Activated CD4-positive, alpha-beta memory T cell treated with anti-CD3 and anti-CD28 coated beads for 36 hours (primary cell): ENCODE measurements at regions of chr1 and their contacts with region 1.

Region 1: GRCh38 chr1:12434174-12434573 is 183.8 kb downstream of the DHRS3 start:
- DNase-seq: peak; percentile 85
- H3K4me3 Mint-ChIP-seq: peak overlapping the region; percentile 41
- H3K27ac Mint-ChIP-seq: peak overlapping the region; percentile 83
- H3K4me1 Mint-ChIP-seq: peaks cover 62% of the 10 kb centered on the region
- H3K27me3 Mint-ChIP-seq: no peaks in the 10 kb centered on the region

Region 2: GRCh38 chr1:12229835-12230548 is 204.2 kb before region 1 on chr1 and contains the start of gene VPS13D:
- CTCF ChIA-PET with region 1: no interaction called
- POLR2A ChIA-PET with region 1: no interaction called
- intact Hi-C with region 1: no loop called
- DNase-seq: peak; percentile 87
- H3K4me3 Mint-ChIP-seq: peak within 1 kb of the TSS; percentile 81
- H3K27ac Mint-ChIP-seq: peak within 1 kb of the TSS; percentile 45
- H3K4me1 Mint-ChIP-seq: peaks cover 23% of the 10 kb centered on the region
- H3K27me3 Mint-ChIP-seq: no peaks in the 10 kb centered on the region
- total RNA-seq, gene VPS13D: 25.0 to 25.4 TPM

Region 3: DNA sequence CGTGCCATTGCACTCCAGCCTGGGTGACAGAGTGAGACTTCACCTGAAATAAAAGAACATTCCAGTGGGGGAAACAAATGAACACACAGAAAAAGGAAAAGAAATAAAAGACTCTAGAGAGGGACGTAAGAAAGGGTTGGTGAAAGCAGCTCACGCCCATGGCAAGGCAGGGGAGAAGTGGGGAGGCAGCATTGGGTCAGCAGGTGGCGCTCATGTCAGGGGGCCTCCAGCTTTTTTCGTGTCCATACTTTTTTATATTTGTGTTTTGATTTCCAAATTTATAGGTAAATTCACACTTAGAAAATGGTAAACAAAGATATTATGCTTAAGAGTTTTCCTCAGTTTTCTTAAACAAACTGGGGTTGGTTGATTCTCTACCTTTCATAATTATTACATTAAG is 158.8 kb before region 1 on chr1:
- CTCF ChIA-PET with region 1: no interaction called
- POLR2A ChIA-PET with region 1: no interaction called
- intact Hi-C with region 1: no loop called
- DNase-seq: peak; percentile 63
- H3K4me3 Mint-ChIP-seq: no peak overlapping the region
- H3K27ac Mint-ChIP-seq: no peak overlapping the region
- H3K4me1 Mint-ChIP-seq: no peaks in the 10 kb centered on the region
- H3K27me3 Mint-ChIP-seq: no peaks in the 10 kb centered on the region

Region 4: GRCh38 chr1:12296623-12297022 is 137.6 kb before region 1 on chr1:
- CTCF ChIA-PET with region 1: no interaction called
- POLR2A ChIA-PET with region 1: interaction called, 4 read pairs
- intact Hi-C with region 1: loop called (anchors 1 kb)
- DNase-seq: no peak
- H3K4me3 Mint-ChIP-seq: no peak overlapping the region
- H3K27ac Mint-ChIP-seq: no peak overlapping the region
- H3K4me1 Mint-ChIP-seq: peaks cover 24% of the 10 kb centered on the region
- H3K27me3 Mint-ChIP-seq: no peaks in the 10 kb centered on the region

Region 5: GRCh38 chr1:12415038-12415466 is 19.1 kb before region 1 on chr1:
- CTCF ChIA-PET with region 1: interaction called, 4 read pairs
- POLR2A ChIA-PET with region 1: interaction called, 16 read pairs
- intact Hi-C with region 1: loop called (anchors 1 kb)
- DNase-seq: no peak
- H3K4me3 Mint-ChIP-seq: no peak overlapping the region
- H3K27ac Mint-ChIP-seq: peak overlapping the region; percentile 57
- H3K4me1 Mint-ChIP-seq: peaks cover 21% of the 10 kb centered on the region
- H3K27me3 Mint-ChIP-seq: no peaks in the 10 kb centered on the region

Region 6: DNA sequence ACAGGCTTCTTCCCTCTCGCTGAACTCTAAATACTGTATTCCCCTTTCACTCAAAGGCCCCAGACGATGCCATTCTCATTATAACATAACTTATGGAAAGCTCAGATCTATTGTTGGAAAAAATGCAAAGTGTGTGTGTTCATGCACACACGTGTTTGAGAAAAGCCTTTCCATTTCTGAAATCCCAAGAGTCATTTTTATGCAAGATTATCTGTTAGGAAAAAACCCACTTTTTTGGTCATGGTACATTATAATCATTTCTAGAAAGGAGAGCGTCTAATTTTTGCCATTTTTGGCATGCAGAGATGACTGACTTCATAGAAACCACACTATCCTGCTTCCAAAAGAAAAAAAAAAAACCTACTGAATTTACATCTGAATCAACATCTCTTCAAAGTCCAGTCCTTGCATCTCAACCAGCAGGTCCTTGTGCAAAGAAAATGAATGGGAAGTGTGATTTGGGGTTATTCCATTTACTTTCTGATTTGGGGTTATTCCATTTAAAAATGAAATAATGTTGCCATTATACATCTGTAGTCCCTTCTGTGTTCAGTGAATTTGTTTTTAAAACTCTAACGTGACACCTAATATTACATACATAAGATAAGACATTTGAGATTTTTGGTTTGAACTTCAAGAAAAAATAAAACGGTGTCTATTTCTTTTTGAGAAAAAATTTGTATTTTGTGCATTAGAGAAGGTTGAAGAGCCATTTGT is 33.6 kb after region 1 on chr1:
- CTCF ChIA-PET with region 1: interaction called, 5 read pairs
- POLR2A ChIA-PET with region 1: interaction called, 5 read pairs
- intact Hi-C with region 1: loop called (anchors 1 kb)
- DNase-seq: no peak
- H3K4me3 Mint-ChIP-seq: no peak overlapping the region
- H3K27ac Mint-ChIP-seq: peak overlapping the region; percentile 76
- H3K4me1 Mint-ChIP-seq: peaks cover 48% of the 10 kb centered on the region
- H3K27me3 Mint-ChIP-seq: no peaks in the 10 kb centered on the region

Region 7: GRCh38 chr1:12501661-12502060 is 67.5 kb after region 1 on chr1:
- CTCF ChIA-PET with region 1: no interaction called
- POLR2A ChIA-PET with region 1: interaction called, 13 read pairs
- intact Hi-C with region 1: no loop called
- DNase-seq: peak; percentile 25
- H3K4me3 Mint-ChIP-seq: no peak overlapping the region
- H3K27ac Mint-ChIP-seq: peak overlapping the region; percentile 87
- H3K4me1 Mint-ChIP-seq: peaks cover 36% of the 10 kb centered on the region
- H3K27me3 Mint-ChIP-seq: no peaks in the 10 kb centered on the region

Region 8: DNA sequence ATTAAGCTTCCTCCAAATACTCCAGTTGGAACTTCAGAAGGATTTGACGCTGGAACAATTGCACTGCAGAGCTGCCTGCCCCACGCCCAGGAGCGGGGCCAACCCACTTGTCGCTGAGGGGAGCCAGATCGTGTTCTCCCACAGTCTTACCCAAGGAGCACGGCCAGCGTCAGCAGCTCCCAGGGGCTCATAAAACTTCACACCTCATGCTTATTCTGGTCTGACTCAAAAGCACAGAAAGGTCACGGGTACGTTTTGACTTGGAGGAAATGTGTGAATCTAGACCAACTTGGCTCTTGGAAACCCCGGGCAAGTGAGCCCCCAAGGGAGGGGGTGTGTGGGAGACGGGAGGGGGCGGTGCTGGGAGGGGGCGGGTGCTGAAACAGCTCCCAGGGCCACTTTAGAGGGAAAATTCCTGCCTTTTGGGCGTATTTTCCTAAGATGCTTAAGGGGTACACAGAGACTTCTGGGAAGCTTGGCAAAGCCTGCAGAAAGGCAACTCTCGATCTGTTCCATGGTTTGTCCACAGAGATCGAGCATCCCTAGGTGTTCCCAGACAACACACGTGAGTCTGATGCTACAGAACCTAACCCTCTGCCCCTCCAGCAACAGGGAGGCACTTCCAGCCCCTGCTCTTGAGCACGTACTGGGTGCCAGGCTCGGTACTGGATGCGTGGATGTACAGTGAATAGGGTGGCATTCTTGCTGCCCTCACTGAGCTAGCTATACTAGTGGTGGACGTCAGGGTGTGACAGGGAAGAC is 84.9 kb after region 1 on chr1:
- CTCF ChIA-PET with region 1: no interaction called
- POLR2A ChIA-PET with region 1: interaction called, 6 read pairs
- intact Hi-C with region 1: loop called (anchors 2 kb)
- DNase-seq: peak; percentile 80
- H3K4me3 Mint-ChIP-seq: no peak overlapping the region
- H3K27ac Mint-ChIP-seq: peak overlapping the region; percentile 45
- H3K4me1 Mint-ChIP-seq: peaks cover 28% of the 10 kb centered on the region
- H3K27me3 Mint-ChIP-seq: no peaks in the 10 kb centered on the region